PC-9 (cell line): ENCODE measurements at regions of chr1 and their contacts with region 1.

Region 1: DNA sequence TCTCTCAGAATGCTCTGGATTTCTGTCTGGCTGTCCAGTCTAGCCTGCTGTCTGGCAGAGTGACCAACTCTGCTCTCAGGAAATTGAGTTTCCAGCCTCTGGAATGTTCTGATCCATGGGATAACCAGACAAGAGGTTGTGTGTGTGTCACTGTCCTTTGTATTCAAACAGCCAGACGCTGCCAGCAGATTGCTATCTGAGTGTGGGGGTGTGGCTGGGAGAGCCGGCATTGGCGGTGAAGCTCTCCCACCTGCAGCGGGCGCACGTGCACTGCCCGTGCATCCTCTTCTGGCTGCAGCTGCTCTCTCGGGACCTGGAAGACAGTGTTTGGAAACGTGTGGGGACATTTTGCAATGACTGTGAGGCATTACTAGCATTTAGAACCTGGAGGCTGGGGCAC is 26.1 kb downstream of the PKP1 start:
- DNase-seq: peak; percentile 87 to 89
- H3K4me3 ChIP-seq: no peak overlapping the region
- H3K27ac ChIP-seq: peak overlapping the region; percentile 63
- H3K4me1 ChIP-seq: peaks cover 52% of the 10 kb centered on the region
- H3K27me3 ChIP-seq: no peaks in the 10 kb centered on the region
- CTCF ChIP-seq: no peak

Region 2: DNA sequence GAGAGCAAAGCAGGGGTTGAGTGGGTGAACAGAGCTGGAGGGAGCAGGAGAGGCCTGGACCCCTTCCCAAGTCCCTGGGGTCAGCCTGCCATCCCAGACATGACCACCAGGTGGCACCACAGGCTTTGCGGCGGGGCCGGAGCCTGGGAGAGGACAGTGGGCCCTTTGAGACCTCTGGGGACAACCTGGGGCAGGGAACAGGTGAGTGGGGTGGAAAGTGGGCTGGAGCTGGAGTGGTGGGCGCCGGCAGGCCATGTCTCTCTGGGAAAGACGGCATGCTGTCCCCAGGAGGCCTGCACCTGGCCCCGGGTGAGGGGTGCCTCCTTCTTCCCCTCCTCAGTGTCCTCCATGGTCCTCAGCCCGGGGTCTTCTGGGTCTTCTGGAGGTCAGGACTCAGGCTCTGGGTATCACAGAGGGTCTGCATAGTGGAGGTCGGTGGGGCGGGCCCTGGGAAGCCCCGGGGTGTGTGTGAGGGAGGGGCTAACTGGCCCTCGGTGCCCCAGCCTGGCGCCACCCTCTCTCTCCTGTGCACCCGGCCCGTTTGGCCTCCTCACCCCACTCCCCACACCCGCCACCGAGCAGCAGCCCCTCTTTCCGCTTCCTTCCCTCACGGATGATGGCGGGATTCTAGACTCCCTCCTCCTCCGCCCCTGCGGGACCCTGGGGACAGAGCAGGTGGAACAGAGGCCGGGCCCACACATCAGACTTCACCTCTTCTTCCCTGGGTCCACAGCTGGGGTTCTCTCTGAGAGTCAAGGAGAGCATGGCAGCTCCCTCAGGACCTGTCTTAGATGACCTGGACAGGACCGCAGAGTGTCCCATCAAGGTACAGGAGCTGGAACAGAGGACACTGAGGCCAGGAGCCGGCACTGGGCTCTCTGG is 54.6 kb before region 1 on chr1:
- CTCF ChIA-PET with region 1: interaction called, 6 read pairs
- POLR2A ChIA-PET with region 1: no interaction called
- intact Hi-C with region 1: loop called (anchors 2 kb)
- DNase-seq: peak in 1 of 2 experiments; percentile 77
- H3K4me3 ChIP-seq: no peak overlapping the region
- H3K27ac ChIP-seq: no peak overlapping the region
- H3K4me1 ChIP-seq: peaks cover 8% of the 10 kb centered on the region; the same call in 1 of the 2 replicates
- H3K27me3 ChIP-seq: no peaks in the 10 kb centered on the region
- CTCF ChIP-seq: peak; percentile 99

Region 3: DNA sequence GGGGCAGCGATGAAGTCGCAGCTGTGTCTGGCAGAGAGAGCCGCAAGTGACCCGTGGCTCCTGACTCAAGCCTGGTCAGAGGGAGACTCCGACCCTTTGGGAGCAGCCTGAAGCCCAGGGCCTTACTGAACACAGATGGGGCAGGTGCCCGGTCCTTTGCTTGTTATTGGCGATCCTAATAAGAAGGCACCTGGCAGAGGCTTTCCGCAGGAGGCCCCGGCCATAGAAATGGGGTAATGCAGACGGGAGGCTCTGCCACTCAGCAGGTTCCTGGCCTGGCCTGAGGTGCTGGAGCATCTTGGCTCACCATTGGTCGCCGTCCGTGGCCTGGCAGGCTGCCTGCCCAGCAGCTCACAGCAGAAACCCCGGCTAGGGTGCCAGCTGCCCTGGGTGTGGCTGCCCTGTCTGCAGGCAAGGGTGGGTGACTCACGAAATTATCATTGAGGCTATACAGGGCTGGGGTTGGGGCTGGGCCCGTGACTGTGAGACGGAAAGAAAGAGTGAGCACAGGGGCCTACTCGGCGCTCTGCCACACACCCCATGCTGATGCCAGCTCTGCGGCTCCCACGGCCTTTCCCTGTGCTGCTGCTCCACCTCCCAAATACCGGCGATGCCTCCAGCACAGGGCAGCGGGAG is 34.3 kb before region 1 on chr1:
- CTCF ChIA-PET with region 1: no interaction called
- POLR2A ChIA-PET with region 1: no interaction called
- intact Hi-C with region 1: loop called (anchors 1 kb)
- DNase-seq: peak; percentile 98
- H3K4me3 ChIP-seq: no peak overlapping the region
- H3K27ac ChIP-seq: peak overlapping the region; percentile 78
- H3K4me1 ChIP-seq: peaks cover 33% of the 10 kb centered on the region
- H3K27me3 ChIP-seq: no peaks in the 10 kb centered on the region
- CTCF ChIP-seq: no peak

Region 4: DNA sequence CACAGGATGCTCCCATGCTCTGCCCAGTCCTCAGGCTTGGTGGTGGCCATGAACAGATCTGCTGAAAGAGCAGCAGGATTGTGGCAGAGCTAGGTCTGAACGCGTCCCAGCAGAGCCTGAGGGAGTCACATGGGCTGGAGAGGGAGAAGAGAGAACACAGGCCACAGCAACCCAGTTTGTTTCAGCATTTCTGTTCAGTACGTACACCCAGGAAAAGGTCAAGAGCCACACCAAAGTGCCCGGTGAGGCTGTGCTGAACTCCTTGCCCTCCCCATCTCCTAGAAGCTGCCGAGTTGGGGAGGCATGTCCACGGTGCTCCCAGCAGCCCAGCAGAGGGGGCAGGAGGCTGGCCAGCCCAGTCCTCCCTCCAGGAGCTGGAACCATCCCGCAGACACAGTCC is 20.7 kb before region 1 on chr1:
- CTCF ChIA-PET with region 1: interaction called, 3 read pairs
- POLR2A ChIA-PET with region 1: no interaction called
- intact Hi-C with region 1: loop called (anchors 1 kb)
- DNase-seq: no peak
- H3K4me3 ChIP-seq: no peak overlapping the region
- H3K27ac ChIP-seq: no peak overlapping the region
- H3K4me1 ChIP-seq: peaks cover 37% of the 10 kb centered on the region
- H3K27me3 ChIP-seq: no peaks in the 10 kb centered on the region
- CTCF ChIP-seq: no peak

Region 5: DNA sequence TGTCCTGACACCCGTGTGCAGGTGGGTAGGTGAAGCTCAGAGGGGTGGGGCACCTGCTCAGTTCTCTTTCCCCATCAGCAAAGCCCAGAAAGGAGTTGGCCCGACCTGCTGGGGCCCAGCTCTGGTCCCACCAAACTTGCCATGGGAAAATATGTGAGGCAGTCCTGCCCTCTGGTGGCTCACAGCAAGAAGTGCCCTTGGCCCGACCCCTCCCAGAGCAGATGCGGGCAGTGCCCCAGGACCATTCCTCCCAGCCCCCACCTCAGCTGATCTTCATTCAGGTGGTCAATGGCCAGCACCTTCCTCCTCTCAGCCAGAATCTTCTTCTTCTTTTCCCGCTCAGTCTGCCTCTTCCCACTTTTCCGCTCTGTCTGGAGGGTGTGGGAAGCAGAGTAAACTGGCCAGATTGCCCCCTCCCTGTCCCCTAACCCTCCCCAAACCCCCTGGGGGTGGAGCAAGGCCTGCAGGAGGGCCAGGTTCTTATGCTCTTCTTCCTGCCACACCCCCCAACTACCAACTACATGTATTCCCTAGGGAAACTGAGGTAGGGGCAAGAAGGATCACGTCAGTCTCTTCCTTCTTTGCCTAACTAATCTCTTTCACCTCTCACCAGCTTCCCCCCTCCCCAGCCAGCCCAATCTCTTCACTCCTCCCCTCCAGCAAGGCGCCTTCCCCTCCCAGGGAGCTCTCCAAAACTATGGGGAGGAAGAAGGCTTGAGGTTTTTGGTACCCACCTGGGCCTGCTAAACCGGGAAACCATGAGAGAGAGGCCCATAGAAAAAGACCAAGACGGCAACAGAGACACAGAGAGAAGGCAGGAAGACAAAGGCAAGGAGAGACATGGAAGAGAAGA is 52.5 kb after region 1 on chr1:
- CTCF ChIA-PET with region 1: interaction called, 3 read pairs
- POLR2A ChIA-PET with region 1: no interaction called
- intact Hi-C with region 1: loop called (anchors 1 kb)
- DNase-seq: peak in 1 of 2 experiments; percentile 58
- H3K4me3 ChIP-seq: no peak overlapping the region
- H3K27ac ChIP-seq: no peak overlapping the region
- H3K4me1 ChIP-seq: no peaks in the 10 kb centered on the region
- H3K27me3 ChIP-seq: peaks cover 18% of the 10 kb centered on the region
- CTCF ChIP-seq: peak; percentile 95

Region 6: DNA sequence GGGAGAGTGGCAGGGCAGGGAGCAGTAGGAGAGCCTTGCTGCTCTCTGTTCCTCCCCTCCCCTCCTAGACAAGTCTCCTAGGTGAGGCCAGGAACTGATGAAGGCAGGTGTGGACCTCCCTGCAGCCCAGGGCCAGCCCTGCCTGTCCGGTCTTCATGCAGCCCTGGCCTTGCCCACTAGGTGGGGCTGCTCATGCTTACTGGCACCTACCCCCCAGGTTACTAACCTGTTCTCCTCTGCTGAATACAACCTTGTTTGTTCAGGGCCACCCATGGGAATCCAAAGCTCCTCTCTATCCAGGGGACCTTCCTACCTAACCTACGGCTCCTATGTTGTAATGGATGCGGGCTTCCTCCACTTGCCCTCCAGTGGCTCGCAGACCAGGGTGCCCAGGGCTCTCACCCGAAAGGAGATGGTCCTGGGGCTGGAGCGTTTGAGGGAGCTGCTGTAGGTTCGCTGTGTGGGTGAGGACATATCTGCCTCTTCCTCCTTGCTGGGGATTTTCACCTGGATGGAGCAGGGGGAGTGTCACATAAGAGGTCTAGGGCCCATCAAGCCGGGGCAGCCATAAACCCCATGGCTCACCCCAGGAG is 76.0 kb after region 1 on chr1:
- CTCF ChIA-PET with region 1: no interaction called
- POLR2A ChIA-PET with region 1: interaction called, 11 read pairs
- intact Hi-C with region 1: no loop called
- DNase-seq: peak; percentile 62 to 82
- H3K4me3 ChIP-seq: no peak overlapping the region
- H3K27ac ChIP-seq: no peak overlapping the region
- H3K4me1 ChIP-seq: peaks cover 14% of the 10 kb centered on the region; the same call in 1 of the 2 replicates
- H3K27me3 ChIP-seq: no peaks in the 10 kb centered on the region
- CTCF ChIP-seq: peak; percentile 87